Psoas muscle (tissue), 8 donors: ENCODE measurements at regions of chr6 and their contacts with region 1.

Region 1: GRCh38 chr6:117138920-117139319 is 126.4 kb upstream of the VGLL2 start:
- DNase-seq: no peak
- ATAC-seq: peak; percentile 37 to 64 (median 58)
- H3K4me3 ChIP-seq: no peak overlapping the region
- H3K27ac ChIP-seq: peak overlapping the region; percentile 89
- H3K4me1 ChIP-seq: peaks cover 22% of the 10 kb centered on the region
- H3K27me3 ChIP-seq: no peaks in the 10 kb centered on the region
- CTCF ChIP-seq: no peak

Region 2: DNA sequence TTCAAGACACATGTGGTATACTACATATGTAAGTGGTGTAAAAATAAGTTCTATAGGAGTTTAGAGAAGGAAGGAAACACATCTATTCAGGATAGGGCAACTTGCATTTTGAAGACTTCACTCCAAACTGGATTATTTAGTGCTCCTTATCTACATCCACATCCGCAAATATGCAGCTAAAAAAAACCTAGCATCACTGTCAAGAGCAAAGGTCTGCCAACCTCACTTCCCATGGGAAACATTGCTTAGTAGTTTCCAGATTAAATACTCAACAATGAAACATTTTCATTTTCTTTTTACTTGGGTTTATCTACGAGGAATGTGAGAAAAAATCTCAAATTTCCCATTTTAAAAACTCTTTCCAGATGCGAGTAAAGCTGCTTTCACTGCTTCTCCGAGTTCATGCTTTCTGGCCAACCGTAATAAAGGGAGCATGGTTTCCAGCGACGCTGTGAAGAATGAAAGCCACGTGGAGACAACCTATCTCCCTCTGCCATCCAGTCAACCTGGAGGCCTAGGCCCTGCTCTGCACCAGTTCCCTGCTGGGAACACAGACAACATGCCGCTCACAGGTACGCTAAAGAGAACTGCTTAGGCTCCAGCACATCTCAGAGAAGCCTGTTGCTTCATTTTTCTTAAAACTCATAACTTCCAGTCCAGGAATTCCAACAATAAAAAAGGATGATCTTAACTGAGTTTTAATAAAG is 213.7 kb before region 1 on chr6:
- intact Hi-C with region 1: no loop called
- DNase-seq: no peak
- ATAC-seq: no peak
- H3K4me3 ChIP-seq: no peak overlapping the region
- H3K27ac ChIP-seq: no peak overlapping the region
- H3K4me1 ChIP-seq: no peaks in the 10 kb centered on the region
- H3K27me3 ChIP-seq: peaks cover 0 to 2% (median 0%) of the 10 kb centered on the region in 3 donors
- CTCF ChIP-seq: no peak

Region 3: DNA sequence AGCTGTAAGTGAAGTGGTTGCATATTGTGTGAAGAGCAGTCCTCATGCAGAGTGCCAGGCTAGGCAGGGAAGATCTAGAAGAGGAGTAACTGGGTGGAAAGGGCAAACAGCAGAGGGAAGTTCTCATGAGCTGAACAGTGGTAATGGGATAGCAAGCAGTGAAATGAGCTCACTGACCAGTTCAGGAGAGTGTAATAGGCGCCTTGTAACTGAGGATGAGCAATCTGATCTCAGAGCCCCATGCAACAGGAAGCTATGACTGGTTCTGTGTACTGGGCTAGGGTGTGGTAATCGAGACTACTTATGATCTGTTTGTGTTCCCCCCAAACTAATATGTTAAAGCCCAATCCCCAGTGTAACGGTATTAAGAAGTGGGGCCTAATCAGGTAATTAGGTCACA is 163.3 kb before region 1 on chr6:
- intact Hi-C with region 1: loop called in 1 of 2 experiments (anchors 2 kb)
- DNase-seq: no peak
- ATAC-seq: peak; percentile 90 to 95 (median 92)
- H3K4me3 ChIP-seq: no peak overlapping the region
- H3K27ac ChIP-seq: peak overlapping the region; percentile 86
- H3K4me1 ChIP-seq: peaks cover 30% of the 10 kb centered on the region
- H3K27me3 ChIP-seq: no peaks in the 10 kb centered on the region
- CTCF ChIP-seq: no peak

Region 4: GRCh38 chr6:117167520-117168271 is 28.8 kb after region 1 on chr6:
- intact Hi-C with region 1: loop called in 1 of 2 experiments (anchors 2 kb)
- DNase-seq: peak; percentile 37 to 61
- ATAC-seq: peak; percentile 94 to 97 (median 95)
- H3K4me3 ChIP-seq: no peak overlapping the region
- H3K27ac ChIP-seq: peak overlapping the region; percentile 80
- H3K4me1 ChIP-seq: peaks cover 22% of the 10 kb centered on the region
- H3K27me3 ChIP-seq: no peaks in the 10 kb centered on the region
- CTCF ChIP-seq: no peak